HEK293T (cell line): ENCODE measurements at regions of chr19 and their contacts with region 1.

Region 1: DNA sequence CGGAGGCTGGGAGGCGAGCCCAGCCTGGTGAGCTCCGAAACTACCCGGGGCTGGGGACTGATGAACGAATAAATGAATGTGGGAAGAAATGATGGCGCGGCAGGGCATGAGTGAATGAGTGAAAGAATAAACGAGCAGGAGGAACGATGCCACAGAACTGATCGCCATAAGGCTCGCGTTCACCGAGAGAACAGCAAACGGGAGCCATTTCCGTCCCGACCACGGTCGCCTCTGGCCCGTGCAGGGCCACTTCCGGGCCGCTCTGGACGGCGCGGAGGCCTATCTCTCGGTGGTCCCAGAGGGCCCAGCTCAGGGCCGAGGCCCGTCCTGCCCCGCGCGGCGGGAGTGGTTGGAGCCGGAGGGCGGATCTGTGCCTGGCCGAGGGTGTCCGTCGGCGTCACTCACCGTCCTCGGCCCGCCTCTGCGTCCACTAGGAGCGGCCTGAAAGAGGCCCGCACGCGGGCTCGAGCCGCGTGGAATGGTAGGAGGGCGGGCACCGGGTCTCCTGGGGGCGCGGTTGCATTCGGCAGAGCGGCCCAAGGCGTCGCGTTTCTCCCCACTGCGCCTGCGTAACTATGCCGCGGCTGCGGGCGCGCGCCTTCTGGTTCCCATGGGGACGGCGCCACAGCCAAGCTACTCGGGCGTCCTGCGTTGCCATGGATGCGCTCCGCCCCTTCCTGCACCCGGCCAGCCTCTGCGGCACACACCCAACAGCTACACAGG is at the start of gene ZNF497:
- DNase-seq: peak; percentile 99

Region 2: GRCh38 chr19:58228585-58229254 is 133.7 kb before region 1 on chr19 and contains the start of gene ZNF544:
- CTCF ChIA-PET with region 1: no interaction called
- POLR2A ChIA-PET with region 1: interaction called, 13 read pairs
- DNase-seq: no peak

Region 3: DNA sequence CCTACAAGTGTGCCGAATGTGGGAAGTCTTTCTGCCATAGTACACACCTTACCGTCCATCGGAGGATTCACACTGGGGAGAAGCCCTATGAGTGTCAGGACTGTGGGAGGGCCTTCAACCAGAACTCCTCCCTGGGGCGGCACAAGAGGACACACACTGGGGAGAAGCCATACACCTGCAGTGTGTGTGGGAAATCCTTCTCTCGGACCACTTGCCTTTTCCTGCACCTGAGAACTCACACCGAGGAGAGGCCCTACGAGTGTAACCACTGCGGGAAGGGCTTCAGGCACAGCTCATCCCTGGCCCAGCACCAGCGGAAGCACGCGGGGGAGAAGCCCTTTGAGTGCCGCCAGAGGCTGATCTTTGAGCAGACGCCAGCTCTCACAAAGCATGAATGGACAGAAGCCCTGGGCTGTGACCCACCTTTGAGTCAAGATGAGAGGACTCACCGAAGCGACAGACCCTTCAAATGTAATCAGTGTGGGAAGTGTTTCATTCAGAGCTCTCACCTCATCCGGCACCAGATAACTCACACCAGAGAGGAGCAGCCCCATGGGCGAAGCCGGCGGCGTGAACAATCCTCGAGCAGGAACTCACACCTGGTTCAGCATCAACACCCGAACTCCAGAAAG is 67.6 kb before region 1 on chr19:
- CTCF ChIA-PET with region 1: no interaction called
- POLR2A ChIA-PET with region 1: no interaction called
- DNase-seq: no peak

Region 4: DNA sequence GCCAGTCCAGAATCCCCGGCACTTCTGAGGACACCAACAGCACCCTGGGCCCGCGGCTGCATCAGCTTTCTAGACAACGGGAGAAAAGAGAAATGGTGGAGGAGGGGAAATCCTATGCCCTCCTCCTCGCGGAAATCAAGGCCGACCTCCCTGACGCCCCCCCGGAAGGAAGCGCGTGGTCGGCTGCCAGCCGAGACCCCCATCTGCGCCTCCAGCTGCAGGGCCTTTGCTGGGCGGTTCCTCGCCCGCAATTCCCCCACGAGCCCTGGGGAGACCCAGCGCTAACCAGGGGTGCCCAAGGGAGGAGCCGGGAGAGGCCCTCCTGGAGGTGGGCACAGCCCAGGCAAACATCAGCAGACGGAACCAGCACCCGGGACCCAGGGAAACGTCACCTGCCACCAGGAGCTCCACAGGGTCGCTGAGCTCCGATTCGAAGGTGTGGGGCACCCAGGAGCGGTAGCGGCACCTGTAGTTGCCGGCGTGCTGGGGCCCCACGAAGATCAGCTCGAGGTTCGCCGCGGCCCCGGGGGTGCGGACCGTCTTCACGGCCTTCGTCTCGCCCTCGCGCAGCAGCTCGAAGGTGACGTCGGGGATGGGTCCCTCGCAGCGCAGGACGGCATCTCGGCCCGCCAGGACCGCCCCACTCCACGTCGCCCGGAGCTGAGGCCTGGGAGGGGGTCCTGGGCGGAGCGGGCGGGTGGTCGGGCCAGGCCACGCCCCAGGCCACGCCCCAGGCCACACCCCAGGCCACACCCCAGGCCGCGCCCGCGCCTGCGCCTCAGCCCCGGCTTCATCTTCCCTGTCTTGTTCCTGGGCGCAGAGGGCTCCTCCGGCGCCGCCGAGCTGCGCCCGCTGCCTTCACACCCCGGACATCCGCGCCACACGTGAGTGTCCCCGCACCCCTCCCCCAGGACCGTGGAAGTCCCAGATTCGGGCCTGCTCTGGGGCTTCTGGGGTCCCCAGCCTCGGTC is 15.2 kb before region 1 on chr19:
- CTCF ChIA-PET with region 1: no interaction called
- POLR2A ChIA-PET with region 1: interaction called, 30 read pairs
- DNase-seq: peak; percentile 97

Region 5: DNA sequence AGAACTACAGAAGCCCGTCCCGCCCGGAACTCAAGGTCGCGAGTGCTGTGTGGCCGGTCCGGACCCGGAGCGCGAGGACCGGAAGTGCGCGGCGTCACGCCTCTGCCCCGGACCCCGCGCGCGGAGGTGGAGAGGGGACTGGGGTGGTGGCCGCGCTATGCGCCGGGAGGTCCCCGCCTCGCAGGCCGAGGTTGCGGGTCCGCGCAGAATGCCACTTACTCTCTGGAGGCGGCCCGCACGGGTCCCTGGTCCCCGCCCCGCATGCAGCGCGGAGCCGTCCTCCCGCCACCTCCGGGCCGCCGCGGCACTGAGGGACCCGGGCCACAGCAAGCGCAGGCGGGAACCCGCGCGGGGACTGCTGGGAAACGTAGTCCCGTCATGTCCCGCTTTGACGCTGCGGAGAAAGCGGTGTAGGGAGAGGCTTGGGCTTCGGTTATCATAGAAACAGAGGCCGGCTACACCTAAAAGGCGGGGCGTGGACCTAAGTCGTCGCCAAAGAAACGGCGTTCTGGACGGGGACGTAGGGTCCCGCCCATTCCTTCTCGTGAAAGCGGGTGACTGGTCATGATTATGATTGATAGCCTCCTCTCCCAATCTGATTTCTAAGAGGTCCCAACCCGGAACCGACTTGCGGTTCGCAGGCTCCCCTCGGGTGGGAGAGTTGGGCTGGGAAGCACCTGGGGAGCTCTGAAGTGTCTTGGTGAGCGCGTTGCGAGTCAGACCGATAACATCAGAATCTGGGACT is 18.5 kb after region 1 on chr19 and contains the start of gene ZNF837:
- CTCF ChIA-PET with region 1: no interaction called
- POLR2A ChIA-PET with region 1: interaction called, 29 read pairs
- DNase-seq: peak; percentile 93

Region 6: DNA sequence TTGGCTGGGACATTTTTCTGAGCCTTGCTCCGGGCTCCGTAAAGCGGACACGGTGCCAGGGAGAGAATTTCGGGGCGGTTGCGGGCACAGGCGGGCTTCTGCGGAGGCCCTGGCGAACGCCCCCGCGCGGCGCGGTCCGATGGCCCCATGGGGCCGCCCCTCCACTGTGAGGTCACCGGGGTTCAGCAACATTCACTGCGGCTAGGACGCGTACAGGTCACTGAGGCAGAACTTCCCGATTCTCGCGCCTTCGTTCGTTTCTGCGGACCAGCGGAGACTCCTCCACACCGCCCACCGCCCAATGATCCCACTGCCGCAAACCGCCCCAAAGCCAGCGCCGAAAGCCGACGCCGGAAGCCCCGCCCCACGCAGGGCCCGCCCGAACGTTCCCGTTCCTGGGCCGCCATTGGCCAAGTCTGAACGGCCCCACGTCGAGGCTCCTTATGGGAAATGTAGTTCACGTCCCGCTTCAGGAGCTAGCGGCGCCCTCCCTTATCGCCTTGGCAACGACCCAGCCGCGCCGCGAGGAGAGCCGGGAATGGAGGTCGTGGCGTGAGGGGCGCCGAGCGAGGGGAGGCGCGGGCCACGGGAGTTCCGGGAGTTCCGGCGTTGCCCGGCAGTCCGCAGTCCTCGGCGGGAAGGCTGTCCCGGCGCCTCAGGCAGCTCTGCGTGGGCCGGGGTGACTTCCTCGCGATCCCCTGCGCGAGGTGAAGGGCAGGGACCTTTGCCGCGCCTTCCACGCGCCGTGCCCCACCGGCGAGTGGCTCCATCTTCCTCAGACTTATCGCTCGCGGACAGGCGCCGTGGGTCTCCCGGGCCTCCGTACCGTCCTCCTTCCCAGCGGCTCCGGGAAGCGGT is 45.9 kb after region 1 on chr19 and contains the start of gene ZNF584:
- CTCF ChIA-PET with region 1: no interaction called
- POLR2A ChIA-PET with region 1: interaction called, 17 read pairs
- DNase-seq: peak; percentile 91